Activated B cell treated with CpG ODN at 0.5 μM for 24 hours (primary cell): ENCODE measurements at regions of chr13 and their contacts with region 1.

Region 1: DNA sequence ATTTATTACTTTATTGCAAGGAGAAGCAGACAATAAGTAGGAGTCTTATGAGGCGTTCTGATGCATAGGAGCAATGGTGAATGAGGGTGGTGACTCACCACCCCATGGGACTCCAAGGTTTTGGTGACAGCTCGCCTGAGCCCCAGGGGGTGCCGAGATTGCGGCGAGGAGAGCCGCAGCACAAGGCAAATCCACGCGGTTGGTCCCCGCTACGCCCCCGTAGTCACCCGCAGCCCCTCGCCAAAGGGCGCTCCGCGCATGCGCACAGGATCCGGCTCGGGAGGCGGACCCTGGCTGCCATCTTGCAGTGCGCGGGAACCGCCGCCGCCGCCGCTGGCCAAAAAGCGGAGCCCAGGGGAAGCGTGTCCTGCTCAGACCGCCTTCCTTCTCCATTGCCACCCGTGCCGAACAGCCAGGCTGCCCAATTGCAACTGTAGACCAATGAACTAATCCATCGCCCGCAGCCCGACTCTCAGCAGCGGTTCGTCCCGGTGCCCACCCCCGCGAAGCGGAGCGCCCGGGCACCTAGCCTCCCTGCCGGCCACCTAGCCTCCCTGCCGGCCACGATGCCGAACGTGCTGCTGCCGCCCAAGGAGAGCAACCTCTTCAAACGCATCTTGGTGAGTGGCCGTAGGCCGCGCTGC is at the start of gene NAA16:
- DNase-seq: peak; percentile 98
- ATAC-seq: peak; percentile 92
- H3K4me3 Mint-ChIP-seq: peak within 1 kb of the TSS; percentile 96
- H3K27ac Mint-ChIP-seq: peak within 1 kb of the TSS; percentile 90
- H3K4me1 Mint-ChIP-seq: peaks cover 44% of the 10 kb centered on the region
- H3K27me3 Mint-ChIP-seq: no peaks in the 10 kb centered on the region
- CTCF ChIP-seq: no peak
- total RNA-seq, gene NAA16: 18.5 and 21.4 TPM in 2 replicates

Region 2: GRCh38 chr13:40445557-40445990 is 865.5 kb before region 1 on chr13:
- CTCF ChIA-PET with region 1: no interaction called
- POLR2A ChIA-PET with region 1: no interaction called
- intact Hi-C with region 1: loop called (anchors 10 kb)
- DNase-seq: peak; percentile 80
- ATAC-seq: peak; percentile 96
- H3K4me3 Mint-ChIP-seq: peak overlapping the region; percentile 66
- H3K27ac Mint-ChIP-seq: peak overlapping the region; percentile 95
- H3K4me1 Mint-ChIP-seq: peaks cover 75% of the 10 kb centered on the region
- H3K27me3 Mint-ChIP-seq: no peaks in the 10 kb centered on the region
- CTCF ChIP-seq: no peak

Region 3: GRCh38 chr13:40982772-40983171 is 328.3 kb before region 1 on chr13:
- CTCF ChIA-PET with region 1: no interaction called
- POLR2A ChIA-PET with region 1: no interaction called
- intact Hi-C with region 1: loop called (anchors 5 kb)
- DNase-seq: no peak
- ATAC-seq: peak; percentile 64
- H3K4me3 Mint-ChIP-seq: peak overlapping the region; percentile 87
- H3K27ac Mint-ChIP-seq: peak overlapping the region; percentile 86
- H3K4me1 Mint-ChIP-seq: peaks cover 80% of the 10 kb centered on the region
- H3K27me3 Mint-ChIP-seq: no peaks in the 10 kb centered on the region
- CTCF ChIP-seq: no peak

Region 4: DNA sequence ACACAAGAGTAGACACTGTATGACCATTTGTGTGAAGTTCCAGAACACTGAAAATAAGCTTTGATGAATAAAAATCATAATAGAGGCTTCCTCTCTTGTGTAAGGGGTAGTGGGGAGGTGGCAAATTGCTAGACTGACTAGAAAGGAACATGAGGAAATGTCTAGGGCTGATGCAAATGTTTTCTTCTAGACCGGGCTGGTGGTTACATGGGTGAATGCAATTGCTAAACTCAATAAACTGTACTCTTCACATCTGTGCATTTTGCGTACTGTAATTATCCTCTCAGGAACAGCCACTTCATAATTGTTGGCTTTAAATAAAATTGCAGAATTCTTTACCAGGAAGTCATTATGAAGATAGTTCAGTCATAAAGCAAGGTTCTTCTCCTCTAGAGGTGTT is 111.6 kb before region 1 on chr13:
- CTCF ChIA-PET with region 1: no interaction called
- POLR2A ChIA-PET with region 1: no interaction called
- intact Hi-C with region 1: loop called (anchors 1 kb)
- DNase-seq: no peak
- ATAC-seq: peak; percentile 90
- H3K4me3 Mint-ChIP-seq: peak overlapping the region; percentile 55
- H3K27ac Mint-ChIP-seq: peak overlapping the region; percentile 87
- H3K4me1 Mint-ChIP-seq: peaks cover 47% of the 10 kb centered on the region
- H3K27me3 Mint-ChIP-seq: no peaks in the 10 kb centered on the region
- CTCF ChIP-seq: no peak

Region 5: DNA sequence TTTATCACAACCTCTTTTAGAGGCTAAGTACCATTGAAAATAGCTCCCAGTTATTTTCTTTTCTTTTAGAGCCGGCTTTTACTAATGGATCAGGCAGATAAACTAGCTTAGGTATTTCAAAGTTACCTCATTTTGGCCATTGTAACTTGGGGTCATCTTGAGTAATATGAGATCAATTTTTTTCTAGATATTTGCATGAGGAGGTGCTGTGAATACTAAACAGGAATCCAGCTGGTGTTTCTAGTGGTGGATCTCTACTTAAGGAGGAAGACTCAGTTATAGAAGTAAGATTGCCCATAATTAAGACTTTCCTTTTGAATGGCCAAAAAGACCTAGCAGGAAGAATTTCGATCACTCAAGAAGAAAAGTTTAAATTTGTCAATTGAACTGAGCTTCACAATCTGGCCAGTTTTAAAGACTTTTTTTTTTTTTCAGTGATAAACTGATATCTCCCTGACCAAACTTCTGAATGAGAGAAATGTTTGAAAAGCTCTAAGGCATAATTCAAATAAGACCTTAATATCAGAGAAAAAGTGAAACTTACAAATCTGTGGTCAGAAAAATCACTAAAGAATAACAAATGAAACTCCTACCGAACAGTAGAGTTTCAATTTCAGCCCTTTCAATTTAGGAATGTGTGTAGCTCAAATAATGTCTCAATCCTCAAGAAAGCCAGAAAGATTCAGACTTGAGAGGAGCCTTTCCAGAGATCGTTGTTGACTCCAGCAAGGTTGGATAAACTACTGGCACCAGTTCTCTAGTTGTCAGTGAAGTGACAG is 11.6 kb before region 1 on chr13:
- CTCF ChIA-PET with region 1: no interaction called
- POLR2A ChIA-PET with region 1: no interaction called
- intact Hi-C with region 1: no loop called
- DNase-seq: no peak
- ATAC-seq: no peak
- H3K4me3 Mint-ChIP-seq: no peak overlapping the region
- H3K27ac Mint-ChIP-seq: no peak overlapping the region
- H3K4me1 Mint-ChIP-seq: no peaks in the 10 kb centered on the region
- H3K27me3 Mint-ChIP-seq: no peaks in the 10 kb centered on the region
- CTCF ChIP-seq: no peak

Region 6: GRCh38 chr13:41465241-41465847 is 154.3 kb after region 1 on chr13:
- CTCF ChIA-PET with region 1: no interaction called
- POLR2A ChIA-PET with region 1: no interaction called
- intact Hi-C with region 1: loop called (anchors 2 kb)
- DNase-seq: peak; percentile 57
- ATAC-seq: peak; percentile 92
- H3K4me3 Mint-ChIP-seq: peak overlapping the region; percentile 47
- H3K27ac Mint-ChIP-seq: peak overlapping the region; percentile 86
- H3K4me1 Mint-ChIP-seq: peaks cover 56% of the 10 kb centered on the region
- H3K27me3 Mint-ChIP-seq: peaks cover 3% of the 10 kb centered on the region
- CTCF ChIP-seq: no peak

Region 7: DNA sequence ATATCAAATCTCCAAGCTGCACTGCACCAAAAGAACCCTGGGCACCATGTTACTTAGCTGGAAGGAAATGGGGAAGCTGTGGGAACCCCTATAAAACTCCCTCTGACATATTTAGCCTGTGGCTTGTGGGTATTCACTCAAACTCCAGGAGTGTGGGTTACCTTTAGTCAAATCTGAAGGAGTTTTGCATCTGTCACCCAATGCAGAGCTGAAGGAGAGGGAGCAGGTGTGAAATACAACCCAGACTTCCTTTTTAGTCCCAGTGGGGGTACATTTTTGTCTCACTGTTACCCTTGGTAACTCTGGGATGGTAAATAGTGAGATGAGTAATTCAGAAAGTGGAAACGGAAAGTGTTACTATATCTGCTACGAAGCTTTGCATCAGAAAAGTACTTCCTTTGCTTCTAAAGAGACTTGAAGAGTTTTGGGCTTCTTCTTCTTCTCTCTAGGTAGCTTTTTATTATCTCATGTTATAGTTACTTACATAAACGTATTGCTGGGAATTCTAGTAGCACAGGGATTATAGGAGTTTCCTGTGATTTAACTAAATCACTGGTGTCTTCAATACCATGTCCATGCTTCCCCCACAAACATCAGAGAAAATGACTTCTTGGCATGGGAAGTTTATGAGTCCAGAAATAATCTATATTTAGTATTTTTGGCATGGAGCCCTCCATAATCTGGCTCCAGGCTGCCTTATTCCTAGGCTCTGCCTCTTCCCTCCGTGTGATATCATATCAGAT is 1066.7 kb after region 1 on chr13:
- CTCF ChIA-PET with region 1: no interaction called
- POLR2A ChIA-PET with region 1: no interaction called
- intact Hi-C with region 1: loop called (anchors 1 kb)
- DNase-seq: no peak
- ATAC-seq: peak; percentile 74
- H3K4me3 Mint-ChIP-seq: peak overlapping the region; percentile 60
- H3K27ac Mint-ChIP-seq: peak overlapping the region; percentile 91
- H3K4me1 Mint-ChIP-seq: peaks cover 54% of the 10 kb centered on the region
- H3K27me3 Mint-ChIP-seq: no peaks in the 10 kb centered on the region
- CTCF ChIP-seq: no peak